Pancreas (tissue), 10 donors: ENCODE measurements at regions of chr19 and their contacts with region 1.

Region 1: GRCh38 chr19:30784850-30785457 is 412.8 kb downstream of the ZNF536 start:
- DNase-seq: peak in 5 of 6 donors; percentile 16 to 81 (median 51)
- ATAC-seq: peak in 3 of 4 donors; percentile 65 to 69 (median 67)
- H3K4me3 ChIP-seq: no peak overlapping the region
- H3K27ac ChIP-seq: no peak overlapping the region
- H3K4me1 ChIP-seq: no peaks in the 10 kb centered on the region
- H3K27me3 ChIP-seq: no peaks in the 10 kb centered on the region
- CTCF ChIP-seq: peak; percentile 45 to 52 (median 50)

Region 2: GRCh38 chr19:31356587-31357314 is 571.8 kb after region 1 on chr19:
- intact Hi-C with region 1: loop called in 1 of 3 experiments (anchors 5 kb)
- DNase-seq: peak in 4 of 6 donors; percentile 33 to 84 (median 45)
- ATAC-seq: peak; percentile 53 to 93 (median 80)
- H3K4me3 ChIP-seq: no peak overlapping the region
- H3K27ac ChIP-seq: no peak overlapping the region
- H3K4me1 ChIP-seq: no peaks in the 10 kb centered on the region
- H3K27me3 ChIP-seq: peaks cover 0 to 26% (median 4%) of the 10 kb centered on the region in 4 donors
- CTCF ChIP-seq: peak; percentile 27 to 39 (median 34)

Region 3: GRCh38 chr19:32224371-32225244 is 1439.7 kb after region 1 on chr19:
- intact Hi-C with region 1: loop called in 1 of 3 experiments (anchors 10 kb)
- DNase-seq: peak in 5 of 6 donors; percentile 25 to 94 (median 69)
- ATAC-seq: peak; percentile 81 to 99 (median 97)
- H3K4me3 ChIP-seq: peak overlapping the region in 1 of 4 donors; percentile 9
- H3K27ac ChIP-seq: no peak overlapping the region
- H3K4me1 ChIP-seq: no peaks in the 10 kb centered on the region
- H3K27me3 ChIP-seq: peaks cover 0 to 14% (median 8%) of the 10 kb centered on the region in 4 donors
- CTCF ChIP-seq: peak; percentile 98 to 100 (median 99)

Region 4: GRCh38 chr19:32238076-32238475 is 1453.1 kb after region 1 on chr19:
- intact Hi-C with region 1: loop called in 1 of 3 experiments (anchors 10 kb)
- DNase-seq: no peak
- ATAC-seq: no peak
- H3K4me3 ChIP-seq: no peak overlapping the region
- H3K27ac ChIP-seq: no peak overlapping the region
- H3K4me1 ChIP-seq: no peaks in the 10 kb centered on the region
- H3K27me3 ChIP-seq: no peaks in the 10 kb centered on the region
- CTCF ChIP-seq: no peak